ENCODE measurements at regions of chr14 and their contacts with region 1.

Region 1: DNA sequence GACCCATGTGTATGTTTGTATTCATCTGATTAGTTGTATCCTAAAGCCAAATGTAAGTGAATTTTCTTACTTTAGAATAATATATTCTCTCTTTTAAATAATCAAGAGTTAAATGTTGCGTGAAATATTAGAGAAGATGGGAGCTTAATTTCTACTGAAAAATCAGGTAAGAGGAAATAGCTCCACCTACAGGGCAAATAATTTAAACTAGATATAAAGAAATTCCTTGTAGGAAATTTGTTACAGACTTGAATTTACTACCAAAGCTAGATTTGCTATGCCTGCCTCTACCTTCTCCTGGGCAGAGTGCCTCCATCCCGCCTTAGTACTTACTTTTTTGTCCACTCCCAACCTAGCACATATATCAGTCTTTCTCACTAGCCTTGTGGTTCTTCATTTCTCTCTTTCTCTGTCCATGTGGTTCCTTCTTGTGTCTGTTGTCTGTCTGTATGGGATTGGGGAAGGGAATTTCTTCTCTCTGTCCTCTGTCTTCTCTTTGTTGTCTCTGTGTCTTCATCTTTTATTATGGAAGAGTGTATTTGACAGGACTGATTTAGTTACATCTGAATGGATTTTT is 44.7 kb downstream of the PALS1 start:
- DNase-seq: peak; percentile 62
- H3K4me3 ChIP-seq: no peak overlapping the region
- H3K27ac ChIP-seq: no peak overlapping the region
- H3K4me1 ChIP-seq: no peaks in the 10 kb centered on the region
- H3K27me3 ChIP-seq: no peaks in the 10 kb centered on the region

Region 2: DNA sequence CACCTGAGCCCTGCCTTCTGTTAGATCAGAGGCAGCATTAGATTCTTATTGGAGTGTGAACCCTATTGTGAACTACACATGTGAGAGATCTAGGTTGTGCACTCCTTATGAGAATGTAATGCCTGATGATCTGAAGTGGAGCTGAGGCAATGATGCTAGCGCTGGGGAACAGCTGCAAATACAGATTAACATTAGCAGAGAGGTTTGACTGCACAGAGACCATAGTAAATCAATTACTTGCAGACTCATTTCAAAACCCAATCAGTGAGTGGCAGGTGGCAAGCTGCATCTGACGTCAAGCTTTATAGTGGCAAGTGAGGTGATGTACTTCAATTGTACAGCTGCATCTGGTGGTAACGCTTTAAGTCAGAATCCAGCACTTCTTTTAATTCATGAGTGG is 636.5 kb before region 1 on chr14:
- in situ Hi-C with region 1: loop called (anchors 25 kb)
- DNase-seq: no peak
- H3K4me3 ChIP-seq: no peak overlapping the region
- H3K27ac ChIP-seq: no peak overlapping the region
- H3K4me1 ChIP-seq: no peaks in the 10 kb centered on the region
- H3K27me3 ChIP-seq: no peaks in the 10 kb centered on the region

Region 3: DNA sequence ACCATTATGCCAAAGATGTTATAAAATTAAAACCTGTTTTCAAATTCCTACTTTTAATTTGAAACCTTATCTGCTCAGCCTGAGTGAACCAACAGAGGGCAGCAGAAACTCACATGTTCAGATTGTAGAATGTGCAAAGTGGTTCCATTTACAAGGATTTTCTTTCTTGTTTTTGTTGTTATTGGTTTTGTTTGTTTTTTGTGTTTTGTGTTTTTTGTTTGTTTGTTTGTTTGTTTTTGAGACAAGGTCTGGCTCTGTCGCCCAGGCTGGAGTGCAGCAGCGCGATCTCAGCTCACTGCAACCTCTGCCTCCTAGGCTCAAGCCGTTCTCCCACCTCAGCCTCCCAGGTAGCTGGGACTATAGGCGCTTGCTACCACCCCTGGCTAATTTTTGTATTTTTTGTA is 119.5 kb before region 1 on chr14:
- in situ Hi-C with region 1: loop called (anchors 5 kb)
- DNase-seq: peak; percentile 69
- H3K4me3 ChIP-seq: no peak overlapping the region
- H3K27ac ChIP-seq: no peak overlapping the region
- H3K4me1 ChIP-seq: peaks cover 13% of the 10 kb centered on the region
- H3K27me3 ChIP-seq: no peaks in the 10 kb centered on the region